ENCODE measurements at regions of chr16 and their contacts with region 1.

Region 1: DNA sequence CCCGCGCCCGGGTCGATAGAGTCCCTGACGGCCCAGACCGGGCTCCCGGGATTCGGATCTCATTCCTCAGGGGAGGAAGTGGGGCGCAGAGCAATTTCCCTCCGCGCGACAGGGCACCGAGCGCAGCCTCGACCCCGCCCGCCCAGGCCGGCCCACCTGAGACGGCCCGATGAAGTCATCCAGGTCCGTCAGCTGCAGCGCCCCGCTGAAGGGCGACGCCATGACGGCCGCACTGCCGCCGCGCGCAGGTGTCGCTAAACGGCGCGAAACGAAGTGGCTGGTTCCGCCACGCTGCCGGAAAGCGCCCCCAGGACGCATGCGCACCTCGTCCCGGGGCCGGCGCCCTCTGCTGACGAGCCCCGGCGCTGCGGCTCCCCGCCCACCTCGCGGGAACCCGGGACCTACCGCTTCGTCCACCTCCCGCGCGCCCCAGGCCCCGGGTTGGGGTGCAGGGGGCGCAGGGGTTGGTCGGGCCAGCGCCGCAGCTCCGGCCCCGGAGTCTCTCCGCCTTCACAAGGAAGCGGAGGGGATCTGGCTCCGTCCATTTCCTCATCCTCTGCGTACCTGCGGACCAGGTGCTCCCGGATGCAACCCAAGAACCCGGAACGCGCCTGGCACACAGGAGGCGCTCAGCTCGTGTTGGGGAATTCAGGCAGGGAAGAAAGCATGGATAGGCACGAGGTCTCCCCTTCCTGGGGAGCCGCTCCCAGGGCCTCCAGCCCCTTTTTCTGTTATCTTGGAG is at the start of gene CIAO3:
- DNase-seq: peak; percentile 90
- H3K4me3 Mint-ChIP-seq: peak within 1 kb of the TSS; percentile 79
- H3K27ac Mint-ChIP-seq: peak within 1 kb of the TSS; percentile 81
- H3K4me1 Mint-ChIP-seq: peaks cover 24% of the 10 kb centered on the region
- H3K27me3 Mint-ChIP-seq: no peaks in the 10 kb centered on the region
- total RNA-seq, gene CIAO3: 39.5 to 39.9 TPM

Region 2: GRCh38 chr16:546909-547770 is 193.8 kb before region 1 on chr16:
- CTCF ChIA-PET with region 1: no interaction called
- POLR2A ChIA-PET with region 1: no interaction called
- DNase-seq: peak; percentile 27
- H3K4me3 Mint-ChIP-seq: no peak overlapping the region
- H3K27ac Mint-ChIP-seq: no peak overlapping the region
- H3K4me1 Mint-ChIP-seq: peaks cover 3% of the 10 kb centered on the region
- H3K27me3 Mint-ChIP-seq: no peaks in the 10 kb centered on the region

Region 3: GRCh38 chr16:726438-727290 is 14.3 kb before region 1 on chr16 and contains the starts of genes CCDC78 and HAGHL:
- CTCF ChIA-PET with region 1: interaction called, 14 read pairs
- POLR2A ChIA-PET with region 1: no interaction called
- DNase-seq: peak; percentile 52
- H3K4me3 Mint-ChIP-seq: peak within 1 kb of the TSS; percentile 70
- H3K27ac Mint-ChIP-seq: peak within 1 kb of the TSS; percentile 19
- H3K4me1 Mint-ChIP-seq: peaks cover 3% of the 10 kb centered on the region
- H3K27me3 Mint-ChIP-seq: no peaks in the 10 kb centered on the region
- total RNA-seq, gene CCDC78: 1.6 to 2.3 TPM
- total RNA-seq, gene HAGHL: 5.0 to 5.7 TPM

Region 4: GRCh38 chr16:931626-932500 is 190.9 kb after region 1 on chr16:
- CTCF ChIA-PET with region 1: no interaction called
- POLR2A ChIA-PET with region 1: no interaction called
- DNase-seq: no peak
- H3K4me3 Mint-ChIP-seq: no peak overlapping the region
- H3K27ac Mint-ChIP-seq: peak overlapping the region; percentile 42
- H3K4me1 Mint-ChIP-seq: no peaks in the 10 kb centered on the region
- H3K27me3 Mint-ChIP-seq: no peaks in the 10 kb centered on the region

Measured in activated CD4-positive, alpha-beta T cell treated with anti-CD3 and anti-CD28 coated beads, Interleukin-2, amount 10 ng/mL, durations not matched to agents 7 days and 5 days (primary cell).